B cell (primary cell): ENCODE measurements at regions of chr16 and their contacts with region 1.

Region 1: DNA sequence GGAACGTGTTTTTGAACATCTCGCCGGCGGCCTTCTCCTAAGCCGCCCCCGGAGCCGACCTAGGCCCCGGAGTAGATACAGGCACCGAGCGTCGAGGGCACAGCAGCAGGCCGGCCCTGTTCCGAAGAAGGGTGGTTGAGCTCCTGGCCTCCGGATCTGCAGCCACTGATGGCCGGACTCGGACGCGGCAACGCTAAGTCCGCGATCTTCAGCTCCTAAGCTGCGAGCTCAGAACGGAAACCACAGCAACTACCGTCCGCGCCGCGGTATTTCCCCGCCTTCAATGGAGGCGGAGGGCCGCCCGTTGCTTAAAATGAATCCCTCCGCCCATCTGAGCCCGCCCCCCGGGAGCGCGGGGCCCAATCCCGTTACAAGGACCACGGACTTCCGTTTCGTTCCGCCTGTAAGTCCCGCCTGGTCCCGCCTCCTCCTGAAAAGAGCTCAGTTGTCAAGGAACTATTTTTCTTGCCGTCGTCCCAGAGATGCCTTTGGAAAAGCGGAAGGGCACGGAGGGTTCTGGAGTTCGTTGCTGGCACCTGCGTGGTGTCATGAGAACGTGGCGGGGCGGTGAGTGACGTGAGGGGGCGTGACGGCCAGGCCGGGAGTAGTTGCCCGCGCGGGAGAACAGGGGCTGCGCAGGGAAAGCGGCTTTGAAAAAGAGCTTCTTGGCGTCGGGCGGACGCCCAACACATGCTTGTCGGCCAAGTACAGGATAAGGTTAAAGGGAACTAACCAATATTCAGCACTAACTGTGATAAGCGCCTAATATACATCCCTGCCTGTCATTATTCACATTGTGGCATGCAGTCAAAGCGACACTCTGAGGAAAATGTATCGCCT is at the start of gene CFAP20:
- DNase-seq: peak; percentile 99
- ATAC-seq: peak; percentile 93
- H3K4me3 ChIP-seq: peak within 1 kb of the TSS; percentile 66 to 98 (median 75)
- H3K4me3 Mint-ChIP-seq: peak within 1 kb of the TSS; percentile 89
- H3K27ac ChIP-seq: peak within 1 kb of the TSS; percentile 78 to 91
- H3K27ac Mint-ChIP-seq: peak within 1 kb of the TSS; percentile 93
- H3K4me1 ChIP-seq: peaks cover 30 to 36% of the 10 kb centered on the region in 2 donors
- H3K4me1 Mint-ChIP-seq: peaks cover 45% of the 10 kb centered on the region
- H3K27me3 ChIP-seq: no peaks in the 10 kb centered on the region
- H3K27me3 Mint-ChIP-seq: no peaks in the 10 kb centered on the region
- CTCF ChIP-seq: no peak
- total RNA-seq, gene CFAP20: 26.1 and 27.3 TPM in 2 replicates

Region 2: GRCh38 chr16:57984331-57985203 is 144.8 kb before region 1 on chr16:
- CTCF ChIA-PET with region 1: no interaction called
- POLR2A ChIA-PET with region 1: no interaction called
- intact Hi-C with region 1: loop called (anchors 1 kb)
- DNase-seq: peak; percentile 90
- ATAC-seq: peak; percentile 99
- H3K4me3 ChIP-seq: peak overlapping the region; percentile 49 to 69 (median 63)
- H3K4me3 Mint-ChIP-seq: peak overlapping the region; percentile 93
- H3K27ac ChIP-seq: no peak overlapping the region
- H3K27ac Mint-ChIP-seq: peak overlapping the region; percentile 78
- H3K4me1 ChIP-seq: peaks cover 7 to 16% of the 10 kb centered on the region in 2 donors
- H3K4me1 Mint-ChIP-seq: peaks cover 18% of the 10 kb centered on the region
- H3K27me3 ChIP-seq: peaks cover 0 to 14% (median 6%) of the 10 kb centered on the region in 4 experiments
- H3K27me3 Mint-ChIP-seq: peaks cover 10% of the 10 kb centered on the region
- CTCF ChIP-seq: no peak

Region 3: DNA sequence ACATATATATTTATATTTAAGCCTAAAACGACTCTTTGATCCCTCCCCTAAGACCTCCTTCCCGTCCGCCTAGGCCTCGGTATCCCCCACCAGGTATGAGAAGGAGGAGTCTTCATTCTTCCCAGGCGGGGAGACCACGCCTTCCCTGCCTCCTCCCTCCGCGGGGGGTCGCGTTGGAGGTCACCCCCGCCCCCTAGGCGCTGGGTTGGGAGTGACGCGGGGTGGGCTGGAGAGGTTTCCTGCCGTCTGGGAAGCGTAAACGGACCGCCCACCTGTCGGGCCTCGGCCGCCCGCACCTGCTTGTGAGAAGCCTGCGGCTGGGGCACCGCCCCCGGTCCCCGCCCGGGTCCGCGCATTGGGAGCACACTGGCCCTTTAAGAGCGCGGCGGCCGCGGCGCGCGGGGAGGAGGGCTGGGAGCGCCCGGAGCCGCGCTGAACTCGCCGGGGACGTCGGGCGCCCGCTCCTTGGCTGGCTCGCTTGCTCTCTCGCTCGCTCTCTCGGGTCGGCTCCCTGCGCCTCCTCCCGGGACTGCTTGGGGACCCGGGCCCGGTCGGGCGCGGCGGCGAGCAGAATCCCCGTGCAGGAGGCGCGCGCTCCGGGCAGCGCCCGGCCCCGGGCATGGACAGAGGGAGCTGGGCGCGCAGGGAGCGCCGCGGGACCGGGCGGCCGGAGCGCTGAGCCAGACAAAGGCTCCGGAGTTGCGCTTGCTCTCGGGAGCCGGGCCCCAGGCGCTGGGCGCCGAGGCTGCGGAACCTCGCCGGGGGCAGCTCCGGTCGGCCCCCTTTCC is 103.8 kb before region 1 on chr16 and contains the start of gene MMP15:
- CTCF ChIA-PET with region 1: interaction called, 4 read pairs
- POLR2A ChIA-PET with region 1: no interaction called
- intact Hi-C with region 1: loop called (anchors 1 kb)
- DNase-seq: peak; percentile 65
- ATAC-seq: peak; percentile 62
- H3K4me3 ChIP-seq: peak within 1 kb of the TSS; percentile 19 to 72 (median 58)
- H3K4me3 Mint-ChIP-seq: peak within 1 kb of the TSS; percentile 94
- H3K27ac ChIP-seq: no peak within 1 kb of the TSS
- H3K27ac Mint-ChIP-seq: peak within 1 kb of the TSS; percentile 83
- H3K4me1 ChIP-seq: peaks cover 21 to 26% of the 10 kb centered on the region in 2 donors
- H3K4me1 Mint-ChIP-seq: peaks cover 11% of the 10 kb centered on the region
- H3K27me3 ChIP-seq: peaks cover 0 to 44% (median 11%) of the 10 kb centered on the region in 4 experiments
- H3K27me3 Mint-ChIP-seq: peaks cover 28% of the 10 kb centered on the region
- CTCF ChIP-seq: no peak
- total RNA-seq, gene MMP15: not detected in 2 replicates

Region 4: DNA sequence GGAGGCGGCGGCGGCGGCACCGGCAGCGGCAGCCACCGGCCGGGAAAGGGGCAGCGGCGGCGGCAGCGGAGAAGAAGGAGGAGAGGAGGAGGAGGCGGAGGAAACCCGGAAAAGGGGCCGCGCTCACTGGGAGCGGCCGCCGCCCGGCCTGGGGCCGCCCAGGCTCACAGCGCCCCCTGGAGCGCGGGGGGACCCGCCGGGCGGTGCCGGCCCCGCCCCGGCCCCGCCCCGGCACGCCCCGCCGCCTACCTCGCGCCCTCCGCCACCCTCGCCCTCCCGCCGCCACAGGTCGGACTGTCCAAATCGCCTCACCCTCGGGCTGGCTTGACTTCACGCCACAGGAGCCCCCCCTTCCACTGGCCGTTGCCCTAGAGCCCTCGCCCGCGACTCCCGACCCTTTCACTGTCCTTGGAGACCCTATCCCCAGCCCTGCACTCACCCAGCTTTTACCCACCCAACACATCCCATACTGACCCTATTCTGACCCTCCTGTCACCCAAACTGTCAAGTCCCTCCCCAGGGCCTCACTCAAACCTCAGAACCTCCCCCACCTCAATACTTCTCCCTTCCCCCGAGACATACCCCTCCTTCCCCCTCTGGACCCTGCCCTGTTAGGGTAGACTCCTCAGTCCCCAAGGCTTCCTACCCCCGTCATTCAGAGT is 68.8 kb after region 1 on chr16 and contains the start of gene CSNK2A2:
- CTCF ChIA-PET with region 1: interaction called, 4 read pairs
- POLR2A ChIA-PET with region 1: interaction called, 3 read pairs
- intact Hi-C with region 1: loop called (anchors 1 kb)
- DNase-seq: peak; percentile 82
- ATAC-seq: peak; percentile 93
- H3K4me3 ChIP-seq: peak within 1 kb of the TSS; percentile 44 to 83 (median 64)
- H3K4me3 Mint-ChIP-seq: peak within 1 kb of the TSS; percentile 90
- H3K27ac ChIP-seq: peak within 1 kb of the TSS in 1 of 2 donors; percentile 55
- H3K27ac Mint-ChIP-seq: peak within 1 kb of the TSS; percentile 81
- H3K4me1 ChIP-seq: peaks cover 15 to 18% of the 10 kb centered on the region in 2 donors
- H3K4me1 Mint-ChIP-seq: peaks cover 33% of the 10 kb centered on the region
- H3K27me3 ChIP-seq: peaks cover 0 to 7% (median 2%) of the 10 kb centered on the region in 4 experiments
- H3K27me3 Mint-ChIP-seq: peaks cover 10% of the 10 kb centered on the region
- CTCF ChIP-seq: no peak
- total RNA-seq, gene CSNK2A2: 63.5 and 69.4 TPM in 2 replicates

Region 5: GRCh38 chr16:58225964-58226602 is 96.8 kb after region 1 on chr16:
- CTCF ChIA-PET with region 1: no interaction called
- POLR2A ChIA-PET with region 1: no interaction called
- intact Hi-C with region 1: no loop called
- DNase-seq: no peak
- ATAC-seq: no peak
- H3K4me3 ChIP-seq: no peak overlapping the region
- H3K4me3 Mint-ChIP-seq: no peak overlapping the region
- H3K27ac ChIP-seq: no peak overlapping the region
- H3K27ac Mint-ChIP-seq: no peak overlapping the region
- H3K4me1 ChIP-seq: no peaks in the 10 kb centered on the region
- H3K4me1 Mint-ChIP-seq: no peaks in the 10 kb centered on the region
- H3K27me3 ChIP-seq: no peaks in the 10 kb centered on the region
- H3K27me3 Mint-ChIP-seq: peaks cover 17% of the 10 kb centered on the region
- CTCF ChIP-seq: no peak

Region 6: DNA sequence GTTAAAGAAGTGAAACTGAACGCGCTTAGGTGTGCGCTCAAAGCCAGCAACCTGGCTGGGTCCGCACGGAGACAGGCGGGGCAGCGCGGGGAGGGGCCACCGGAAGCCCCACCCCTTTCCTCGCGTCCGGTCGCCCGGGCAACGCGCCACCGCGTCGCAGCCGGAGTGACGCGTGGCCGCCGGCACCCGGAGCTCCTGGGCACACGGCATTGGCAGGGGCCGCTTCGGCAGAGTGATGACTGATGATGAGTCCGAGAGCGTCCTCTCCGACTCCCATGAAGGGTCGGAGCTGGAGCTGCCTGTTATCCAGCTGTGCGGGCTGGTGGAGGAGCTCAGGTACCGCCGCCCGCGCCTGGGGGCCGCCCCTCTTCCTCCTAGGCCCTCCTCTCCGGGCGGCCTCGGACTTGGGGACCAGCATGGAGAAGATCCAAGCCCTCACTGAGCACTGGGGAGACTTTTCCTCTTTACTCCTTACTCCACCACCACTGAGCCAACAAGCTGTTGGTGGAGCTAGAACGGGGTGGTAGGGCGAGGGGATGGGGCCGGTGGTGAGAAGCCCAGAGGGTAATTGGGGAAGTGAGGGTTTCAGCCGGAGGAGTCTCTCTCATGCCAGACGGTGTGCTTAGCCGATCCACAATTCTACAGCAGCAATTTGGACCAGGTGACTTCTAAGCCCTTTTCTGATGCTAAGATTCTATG is 120.6 kb after region 1 on chr16:
- CTCF ChIA-PET with region 1: no interaction called
- POLR2A ChIA-PET with region 1: no interaction called
- intact Hi-C with region 1: loop called (anchors 1 kb)
- DNase-seq: peak; percentile 94
- ATAC-seq: peak; percentile 96
- H3K4me3 ChIP-seq: peak overlapping the region in 4 of 5 experiments; percentile 52 to 71 (median 68)
- H3K4me3 Mint-ChIP-seq: peak overlapping the region; percentile 89
- H3K27ac ChIP-seq: peak overlapping the region in 1 of 2 donors; percentile 56
- H3K27ac Mint-ChIP-seq: peak overlapping the region; percentile 77
- H3K4me1 ChIP-seq: peaks cover 7 to 16% of the 10 kb centered on the region in 2 donors
- H3K4me1 Mint-ChIP-seq: peaks cover 19% of the 10 kb centered on the region
- H3K27me3 ChIP-seq: no peaks in the 10 kb centered on the region
- H3K27me3 Mint-ChIP-seq: no peaks in the 10 kb centered on the region
- CTCF ChIP-seq: no peak

Region 7: DNA sequence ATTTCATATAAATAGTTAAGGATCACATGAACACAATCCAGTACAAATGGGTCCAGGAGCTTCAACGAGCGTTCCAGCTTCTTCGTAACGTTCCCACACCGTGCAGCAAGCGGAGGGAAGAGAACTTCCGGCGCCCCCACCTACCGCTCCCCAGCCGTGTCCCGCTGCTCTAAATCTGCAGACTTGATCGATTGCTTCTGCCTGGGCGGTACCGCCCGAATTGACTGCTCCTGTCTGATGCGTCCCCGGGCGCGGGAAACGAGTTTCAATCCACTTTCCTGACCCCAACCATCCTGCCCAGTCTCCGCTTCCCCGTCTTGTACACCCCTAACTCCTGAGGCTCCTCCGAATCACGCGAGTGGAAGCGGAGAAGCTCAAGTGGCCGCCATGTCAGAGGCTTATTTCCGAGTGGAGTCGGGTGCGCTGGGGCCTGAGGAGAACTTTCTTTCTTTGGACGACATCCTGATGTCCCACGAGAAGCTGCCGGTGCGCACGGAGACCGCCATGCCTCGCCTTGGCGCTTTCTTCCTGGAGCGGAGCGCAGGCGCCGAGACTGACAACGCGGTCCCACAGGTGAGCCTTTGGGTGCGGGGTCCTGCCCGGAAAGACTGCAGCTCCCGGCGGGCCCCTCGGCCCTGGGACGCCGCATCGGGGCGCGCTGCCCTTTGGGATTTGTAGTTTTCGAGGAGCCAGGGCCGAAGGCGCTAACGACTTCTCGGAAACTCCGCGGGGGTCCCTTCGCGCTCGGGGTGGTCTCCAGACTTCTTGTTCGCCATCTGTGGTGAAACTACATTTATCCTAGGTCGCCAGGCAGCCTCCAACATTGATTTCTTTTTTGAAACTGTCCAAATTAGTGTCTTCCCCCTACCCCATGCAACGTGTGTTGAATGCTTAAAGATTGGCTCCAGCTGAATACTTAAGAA is 263.2 kb after region 1 on chr16 and contains the start of gene GINS3:
- CTCF ChIA-PET with region 1: no interaction called
- POLR2A ChIA-PET with region 1: no interaction called
- intact Hi-C with region 1: loop called (anchors 2 kb)
- DNase-seq: peak; percentile 87
- ATAC-seq: peak; percentile 95
- H3K4me3 ChIP-seq: peak within 1 kb of the TSS; percentile 42 to 99 (median 78)
- H3K4me3 Mint-ChIP-seq: peak within 1 kb of the TSS; percentile 93
- H3K27ac ChIP-seq: peak within 1 kb of the TSS; percentile 66 to 75
- H3K27ac Mint-ChIP-seq: peak within 1 kb of the TSS; percentile 86
- H3K4me1 ChIP-seq: peaks cover 6 to 11% of the 10 kb centered on the region in 2 donors
- H3K4me1 Mint-ChIP-seq: peaks cover 16% of the 10 kb centered on the region
- H3K27me3 ChIP-seq: no peaks in the 10 kb centered on the region
- H3K27me3 Mint-ChIP-seq: peaks cover 4% of the 10 kb centered on the region
- CTCF ChIP-seq: no peak
- total RNA-seq, gene GINS3: 2.3 and 2.9 TPM in 2 replicates

Region 8: GRCh38 chr16:58629572-58630104 is 500.3 kb after region 1 on chr16 and contains the start of gene CNOT1:
- CTCF ChIA-PET with region 1: no interaction called
- POLR2A ChIA-PET with region 1: no interaction called
- intact Hi-C with region 1: loop called (anchors 1 kb)
- DNase-seq: no peak
- ATAC-seq: peak; percentile 80
- H3K4me3 ChIP-seq: peak within 1 kb of the TSS; percentile 54 to 100 (median 100)
- H3K4me3 Mint-ChIP-seq: peak within 1 kb of the TSS; percentile 93
- H3K27ac ChIP-seq: peak within 1 kb of the TSS; percentile 99 to 100
- H3K27ac Mint-ChIP-seq: peak within 1 kb of the TSS; percentile 97
- H3K4me1 ChIP-seq: peaks cover 19 to 26% of the 10 kb centered on the region in 2 donors
- H3K4me1 Mint-ChIP-seq: peaks cover 40% of the 10 kb centered on the region
- H3K27me3 ChIP-seq: no peaks in the 10 kb centered on the region
- H3K27me3 Mint-ChIP-seq: no peaks in the 10 kb centered on the region
- CTCF ChIP-seq: no peak
- total RNA-seq, gene CNOT1: 246 and 268 TPM in 2 replicates